ENCODE measurements at regions of chr11 and their contacts with region 1.

Region 1: DNA sequence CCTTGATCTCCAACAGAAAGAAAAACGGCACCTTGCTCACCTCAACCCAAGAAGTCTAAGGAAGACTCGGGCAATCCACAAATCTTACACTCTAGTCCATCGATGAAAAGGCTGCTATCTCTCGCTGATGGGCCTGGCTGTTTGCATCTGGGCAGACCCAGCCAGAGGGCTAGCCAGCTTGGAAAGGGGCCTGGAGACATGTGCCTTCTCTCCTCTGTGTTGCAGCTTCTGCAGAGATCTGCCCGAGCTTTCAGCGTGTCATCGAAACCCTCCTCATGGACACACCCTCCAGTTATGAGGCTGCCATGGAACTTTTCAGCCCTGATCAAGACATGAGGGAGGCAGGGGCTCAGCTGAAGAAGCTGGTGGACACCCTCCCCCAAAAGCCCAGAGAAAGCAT is 3.2 kb downstream of the SCGB1A1 start:
- DNase-seq: no peak
- H3K4me3 ChIP-seq: no peak overlapping the region
- H3K27ac ChIP-seq: no peak overlapping the region
- H3K4me1 ChIP-seq: peaks cover 0 to 32% (median 12%) of the 10 kb centered on the region in 6 donors
- H3K27me3 ChIP-seq: peaks cover 0 to 9% (median 0%) of the 10 kb centered on the region in 7 donors
- CTCF ChIP-seq: no peak
- POLR2A ChIP-seq: no peak

Region 2: GRCh38 chr11:62542750-62543567 is 121.0 kb after region 1 on chr11:
- intact Hi-C with region 1: loop called (anchors 5 kb)
- DNase-seq: peak; percentile 95
- H3K4me3 ChIP-seq: peak overlapping the region; percentile 13 to 98 (median 78)
- H3K27ac ChIP-seq: peak overlapping the region; percentile 82 to 94 (median 90)
- H3K4me1 ChIP-seq: peaks cover 60 to 100% (median 97%) of the 10 kb centered on the region in 6 donors
- H3K27me3 ChIP-seq: peaks cover 0 to 38% (median 16%) of the 10 kb centered on the region in 7 donors
- CTCF ChIP-seq: peak; percentile 97 to 100 (median 99)
- POLR2A ChIP-seq: no peak

Region 3: GRCh38 chr11:62560566-62561103 is 138.6 kb after region 1 on chr11:
- intact Hi-C with region 1: loop called (anchors 5 kb)
- DNase-seq: peak; percentile 83
- H3K4me3 ChIP-seq: no peak overlapping the region
- H3K27ac ChIP-seq: peak overlapping the region in 6 of 8 donors; percentile 24 to 95 (median 32)
- H3K4me1 ChIP-seq: peaks cover 31 to 81% (median 45%) of the 10 kb centered on the region in 6 donors
- H3K27me3 ChIP-seq: no peaks in the 10 kb centered on the region
- CTCF ChIP-seq: peak in 10 of 11 experiments; percentile 40 to 83 (median 69)
- POLR2A ChIP-seq: no peak